ENCODE measurements at regions of chr13 and their contacts with region 1.

Region 1: DNA sequence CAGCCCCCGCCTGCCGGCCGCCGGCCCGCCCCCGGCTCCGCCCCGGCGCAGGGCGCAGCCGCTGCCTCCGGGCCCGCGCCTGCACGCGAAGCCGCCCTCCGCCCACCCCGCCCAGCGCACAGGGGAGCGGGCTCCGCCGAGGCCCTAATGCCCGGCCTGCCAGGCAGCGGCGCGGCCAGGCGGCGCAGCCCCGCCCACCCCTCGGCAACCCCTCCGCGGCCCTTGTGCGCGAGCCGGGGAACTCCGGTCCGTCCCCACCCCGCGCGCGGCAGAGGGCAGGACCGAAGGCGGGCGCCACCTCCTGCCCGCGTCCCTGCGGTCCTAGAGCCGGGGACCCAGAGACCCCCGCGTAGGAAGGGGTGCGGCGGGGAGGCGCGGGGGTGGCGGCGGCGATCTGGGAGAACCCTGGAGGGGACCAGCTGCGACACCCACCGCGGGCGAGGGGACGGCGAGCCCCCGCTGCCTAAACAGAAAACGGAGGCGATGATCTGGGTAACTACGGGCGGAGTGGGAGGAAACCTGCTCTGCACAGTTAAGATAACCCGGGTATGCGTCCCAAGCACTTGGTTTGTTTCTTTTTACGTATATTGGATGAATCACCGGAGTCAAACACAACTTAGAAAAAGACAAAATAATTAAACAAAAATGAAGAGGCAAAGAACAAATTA is 350 bp upstream of the USP12 start:
- DNase-seq: peak; percentile 83
- H3K4me3 Mint-ChIP-seq: peak overlapping the region; percentile 78
- H3K27ac Mint-ChIP-seq: peak overlapping the region; percentile 72
- H3K4me1 Mint-ChIP-seq: peaks cover 37% of the 10 kb centered on the region
- H3K27me3 Mint-ChIP-seq: no peaks in the 10 kb centered on the region
- CTCF ChIP-seq: no peak

Region 2: DNA sequence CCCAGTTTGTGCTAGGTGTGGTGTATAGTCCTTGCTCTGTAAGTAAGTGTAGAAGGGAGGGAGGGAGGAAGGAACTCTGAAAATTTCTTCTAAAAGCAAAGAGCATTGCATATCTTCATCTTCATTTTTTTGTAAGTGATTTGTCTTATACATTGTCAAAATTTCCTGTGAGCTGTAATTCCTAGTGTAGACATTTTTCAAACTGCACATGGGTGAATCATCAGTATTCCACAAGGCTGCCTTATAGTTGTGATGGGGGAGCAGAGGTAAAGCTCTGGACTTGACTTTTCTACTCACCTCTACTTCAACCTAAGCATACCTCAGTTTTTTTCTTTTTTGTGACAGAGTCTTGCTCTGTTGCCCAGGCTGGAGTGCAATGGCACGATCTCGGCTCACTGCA is 831.2 kb before region 1 on chr13:
- CTCF ChIA-PET with region 1: no interaction called
- POLR2A ChIA-PET with region 1: no interaction called
- intact Hi-C with region 1: no loop called
- DNase-seq: no peak
- H3K4me3 Mint-ChIP-seq: no peak overlapping the region
- H3K27ac Mint-ChIP-seq: no peak overlapping the region
- H3K4me1 Mint-ChIP-seq: peaks cover 4% of the 10 kb centered on the region
- H3K27me3 Mint-ChIP-seq: no peaks in the 10 kb centered on the region
- CTCF ChIP-seq: no peak

Region 3: DNA sequence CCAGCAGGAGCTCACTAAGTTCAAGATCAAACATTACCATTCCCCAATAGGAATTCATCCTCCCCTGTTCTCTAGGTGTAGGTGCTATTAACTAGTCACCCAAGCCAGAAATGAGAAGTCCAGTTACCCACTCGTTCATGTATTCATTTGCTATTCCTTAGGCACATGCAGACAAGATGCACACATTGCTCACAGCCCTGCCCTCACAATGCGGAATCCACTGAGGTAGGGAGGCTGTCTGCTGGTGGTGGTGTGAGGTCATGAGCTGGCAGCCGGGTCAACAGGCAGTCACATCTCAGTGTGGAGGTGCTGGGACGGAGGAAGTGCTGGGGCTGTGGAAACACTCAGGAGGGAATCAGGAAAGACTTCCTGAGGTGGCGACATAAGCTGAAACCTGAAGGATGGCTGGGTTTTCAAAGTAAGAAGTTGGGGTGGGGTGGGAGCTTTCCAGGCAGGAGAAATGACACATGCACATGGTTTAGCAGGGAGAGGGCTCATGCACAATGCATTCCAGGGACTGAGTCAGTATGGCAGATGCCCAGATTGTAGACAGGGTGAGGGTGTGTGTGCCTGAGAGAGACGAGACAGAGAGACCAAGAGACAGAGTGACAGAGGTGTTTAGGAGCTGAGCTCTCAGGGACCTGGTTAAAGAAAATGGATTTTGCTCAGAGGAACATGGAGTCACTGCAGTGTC is 117.9 kb before region 1 on chr13:
- CTCF ChIA-PET with region 1: no interaction called
- POLR2A ChIA-PET with region 1: interaction called, 3 read pairs
- intact Hi-C with region 1: loop called (anchors 10 kb)
- DNase-seq: peak; percentile 84
- H3K4me3 Mint-ChIP-seq: no peak overlapping the region
- H3K27ac Mint-ChIP-seq: peak overlapping the region; percentile 53
- H3K4me1 Mint-ChIP-seq: peaks cover 29% of the 10 kb centered on the region
- H3K27me3 Mint-ChIP-seq: no peaks in the 10 kb centered on the region
- CTCF ChIP-seq: no peak

Region 4: DNA sequence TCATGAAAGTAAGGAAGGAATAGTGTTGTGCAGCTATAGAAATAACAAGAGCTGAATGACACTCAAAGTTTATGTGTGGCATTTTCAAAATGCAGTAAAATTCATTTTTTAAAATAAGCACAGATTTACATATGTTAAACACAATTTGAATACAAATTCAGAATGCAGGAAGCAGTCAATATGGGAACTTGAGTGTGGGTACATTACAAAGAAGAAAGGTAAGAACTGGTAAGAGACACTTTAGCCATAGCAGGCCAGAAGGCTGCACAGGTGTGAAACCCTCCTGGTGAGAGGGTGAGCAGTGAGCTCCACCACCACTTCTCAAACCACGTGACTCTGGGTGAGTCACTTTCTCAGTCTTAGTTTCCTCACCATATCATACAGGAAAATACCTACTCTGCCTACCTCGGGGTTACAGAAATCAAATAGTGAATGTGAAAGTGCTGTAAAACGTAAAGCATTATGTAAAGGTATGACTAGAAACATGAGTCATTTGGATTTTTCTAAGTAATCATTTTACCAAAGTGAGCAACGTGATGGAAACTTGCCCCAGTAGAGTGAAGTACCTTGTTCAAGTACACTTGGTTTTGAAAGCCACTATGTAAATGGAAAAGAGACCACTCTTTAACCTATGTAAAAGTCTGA is 40.9 kb before region 1 on chr13:
- CTCF ChIA-PET with region 1: interaction called, 4 read pairs
- POLR2A ChIA-PET with region 1: interaction called, 55 read pairs
- intact Hi-C with region 1: loop called (anchors 1 kb)
- DNase-seq: peak; percentile 90
- H3K4me3 Mint-ChIP-seq: peak overlapping the region; percentile 38
- H3K27ac Mint-ChIP-seq: peak overlapping the region; percentile 35
- H3K4me1 Mint-ChIP-seq: peaks cover 27% of the 10 kb centered on the region
- H3K27me3 Mint-ChIP-seq: no peaks in the 10 kb centered on the region
- CTCF ChIP-seq: no peak

Region 5: GRCh38 chr13:27138457-27139093 is 33.4 kb before region 1 on chr13:
- CTCF ChIA-PET with region 1: interaction called, 4 read pairs
- POLR2A ChIA-PET with region 1: interaction called, 11 read pairs
- intact Hi-C with region 1: no loop called
- DNase-seq: no peak
- H3K4me3 Mint-ChIP-seq: no peak overlapping the region
- H3K27ac Mint-ChIP-seq: no peak overlapping the region
- H3K4me1 Mint-ChIP-seq: no peaks in the 10 kb centered on the region
- H3K27me3 Mint-ChIP-seq: no peaks in the 10 kb centered on the region
- CTCF ChIP-seq: no peak

Region 6: DNA sequence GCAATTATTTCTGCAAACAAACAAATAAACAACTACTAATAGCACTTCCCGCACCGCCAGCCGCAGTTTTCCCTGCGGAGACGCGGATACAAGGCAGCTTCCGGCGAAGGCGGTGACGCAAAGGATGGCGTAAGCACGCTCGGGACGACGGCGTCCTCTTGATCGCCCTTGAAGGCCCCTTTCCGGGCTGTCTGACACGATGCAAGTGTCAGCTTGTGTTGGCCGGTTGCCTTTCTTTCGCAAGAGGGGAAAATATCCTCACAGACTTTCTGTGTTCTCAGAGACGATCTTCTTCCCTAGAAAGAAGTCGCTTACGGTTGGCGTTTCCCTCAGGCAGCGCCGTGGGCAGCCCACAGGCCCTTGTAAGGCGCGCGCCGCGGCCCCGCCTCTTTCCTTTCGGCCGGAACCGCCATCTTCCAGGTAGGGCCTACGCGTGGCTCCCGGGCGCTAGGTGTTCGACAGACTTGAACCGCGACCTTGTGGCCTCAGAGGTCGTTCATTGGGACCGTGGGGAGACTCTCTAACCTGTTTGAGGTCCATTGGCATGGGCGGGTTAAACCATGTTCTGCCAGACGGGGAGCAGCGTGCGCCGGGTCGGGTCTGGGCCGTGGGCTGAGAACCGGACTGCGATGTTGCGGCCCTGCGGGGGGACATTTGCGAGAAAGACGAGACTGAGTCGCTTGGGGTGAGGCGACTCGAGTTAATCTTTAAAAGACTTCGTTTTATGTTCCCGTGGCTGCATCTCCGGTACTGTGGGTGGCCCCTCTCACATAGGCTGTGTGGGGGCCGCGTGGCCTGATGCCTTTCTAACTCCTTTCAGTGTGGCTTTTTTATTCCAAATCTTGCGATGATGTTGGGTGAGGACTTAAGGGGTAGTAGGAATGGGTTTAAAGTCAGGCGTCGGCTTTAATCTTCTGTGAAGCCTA is 79.5 kb after region 1 on chr13 and contains the start of gene RPL21:
- CTCF ChIA-PET with region 1: no interaction called
- POLR2A ChIA-PET with region 1: interaction called, 13 read pairs
- intact Hi-C with region 1: loop called (anchors 1 kb)
- DNase-seq: peak; percentile 95
- H3K4me3 Mint-ChIP-seq: peak within 1 kb of the TSS; percentile 93
- H3K27ac Mint-ChIP-seq: peak within 1 kb of the TSS; percentile 99
- H3K4me1 Mint-ChIP-seq: peaks cover 14% of the 10 kb centered on the region
- H3K27me3 Mint-ChIP-seq: no peaks in the 10 kb centered on the region
- CTCF ChIP-seq: no peak
- total RNA-seq, gene RPL21: 1,293 and 1,479 TPM in 2 replicates

Region 7: DNA sequence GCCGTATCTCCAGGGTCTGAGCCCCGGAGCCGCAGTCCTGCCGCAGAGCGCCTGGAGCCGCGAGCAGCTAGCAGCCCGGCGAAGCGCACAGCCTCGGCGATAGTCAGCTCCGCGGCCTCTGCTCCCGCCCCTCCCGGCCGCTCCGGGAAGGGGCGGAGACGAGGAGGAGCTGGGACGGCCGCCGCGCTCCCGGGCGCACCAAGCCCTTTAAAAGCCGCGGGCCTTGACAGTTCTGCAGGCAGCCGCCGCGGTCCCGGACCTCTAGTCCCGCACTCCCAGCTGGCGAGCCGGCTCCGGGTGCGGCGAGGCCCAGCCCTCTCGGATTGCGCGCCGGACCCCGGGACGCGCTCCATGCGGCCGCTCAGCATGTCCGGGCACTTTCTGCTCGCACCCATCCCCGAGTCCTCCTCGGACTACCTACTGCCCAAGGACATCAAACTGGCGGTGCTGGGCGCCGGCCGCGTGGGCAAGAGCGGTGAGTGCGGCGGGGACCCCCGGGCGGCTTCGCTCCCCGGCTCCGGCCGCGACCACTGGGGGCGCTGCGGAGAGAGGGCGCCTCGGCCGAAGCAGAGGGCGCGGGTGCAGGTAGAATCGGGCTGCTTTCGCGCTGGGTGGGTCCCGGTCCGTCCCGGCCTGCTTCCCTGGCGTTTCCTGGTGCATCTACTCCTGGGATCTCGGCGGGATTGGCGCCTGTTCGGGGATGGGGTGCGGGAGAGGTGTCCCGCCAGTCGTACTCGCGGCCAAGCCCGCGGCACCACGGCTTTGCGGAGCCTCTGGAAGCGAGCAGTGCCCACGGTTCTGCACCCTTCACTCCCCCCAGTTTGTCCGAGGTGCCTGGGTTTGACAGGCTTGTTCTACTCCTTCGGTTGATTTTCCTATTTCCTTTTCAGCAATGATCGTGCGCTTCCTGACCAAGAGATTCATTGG is 98.9 kb after region 1 on chr13 and contains the start of gene RASL11A:
- CTCF ChIA-PET with region 1: no interaction called
- POLR2A ChIA-PET with region 1: interaction called, 4 read pairs
- intact Hi-C with region 1: loop called (anchors 5 kb)
- DNase-seq: peak; percentile 81
- H3K4me3 Mint-ChIP-seq: peak within 1 kb of the TSS; percentile 72
- H3K27ac Mint-ChIP-seq: no peak within 1 kb of the TSS
- H3K4me1 Mint-ChIP-seq: peaks cover 9% of the 10 kb centered on the region
- H3K27me3 Mint-ChIP-seq: no peaks in the 10 kb centered on the region
- CTCF ChIP-seq: peak; percentile 94
- total RNA-seq, gene RASL11A: 0.71 and 0.98 TPM in 2 replicates

Measured in MCF 10A (cell line).